GM12878 (cell line): ENCODE measurements at regions of chr6 and their contacts with region 1.

Region 1: DNA sequence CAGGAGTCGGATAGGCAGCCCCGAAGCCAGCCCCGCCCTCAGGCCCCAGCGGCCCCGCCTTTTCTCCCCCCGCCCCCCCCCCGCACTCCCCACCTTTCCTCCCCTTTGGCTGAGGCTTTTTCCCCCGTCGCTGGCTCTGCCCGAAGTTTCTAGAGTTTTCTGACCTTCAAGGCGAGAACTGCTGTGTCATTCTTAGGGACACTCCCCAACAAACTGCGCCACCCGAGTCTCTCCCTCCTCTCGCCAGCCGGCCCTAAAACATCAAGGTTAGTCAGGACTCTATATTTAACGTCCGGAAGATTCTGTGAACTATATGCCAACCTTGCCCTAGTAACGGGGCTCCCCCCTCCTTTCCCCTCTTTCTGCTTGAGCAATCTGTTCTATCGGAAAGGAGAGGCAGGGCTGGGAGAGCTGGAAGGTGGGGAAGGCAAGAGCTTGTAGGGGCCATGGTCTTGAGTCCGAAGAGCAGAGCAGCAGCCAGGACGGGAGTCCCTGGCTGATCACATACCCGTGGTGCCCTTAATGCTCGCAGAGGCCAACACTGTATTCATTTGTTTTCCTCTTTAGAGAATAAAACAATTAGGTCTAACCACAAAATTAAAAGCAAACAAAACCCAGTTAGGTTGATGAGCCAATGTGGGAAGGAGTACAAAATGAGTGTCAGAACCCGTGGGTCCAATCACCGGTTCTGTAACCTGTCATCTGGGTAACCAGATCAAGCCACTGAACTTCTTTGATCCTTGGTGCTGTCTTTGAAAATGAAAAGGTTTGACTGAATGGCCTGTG is 5.3 kb upstream of the HSPA1B start:
- DNase-seq: no peak
- ATAC-seq: peak; percentile 56
- H3K4me3 ChIP-seq: peak overlapping the region; percentile 78
- H3K27ac ChIP-seq: peak overlapping the region; percentile 50
- H3K4me1 ChIP-seq: peaks cover 14% of the 10 kb centered on the region
- H3K27me3 ChIP-seq: no peaks in the 10 kb centered on the region
- CTCF ChIP-seq: no peak
- EP300 ChIP-seq: no peak
- POLR2A ChIP-seq: peak; percentile 7; the same call in 1 of the 2 replicates
- RAD21 ChIP-seq: no peak

Region 2: DNA sequence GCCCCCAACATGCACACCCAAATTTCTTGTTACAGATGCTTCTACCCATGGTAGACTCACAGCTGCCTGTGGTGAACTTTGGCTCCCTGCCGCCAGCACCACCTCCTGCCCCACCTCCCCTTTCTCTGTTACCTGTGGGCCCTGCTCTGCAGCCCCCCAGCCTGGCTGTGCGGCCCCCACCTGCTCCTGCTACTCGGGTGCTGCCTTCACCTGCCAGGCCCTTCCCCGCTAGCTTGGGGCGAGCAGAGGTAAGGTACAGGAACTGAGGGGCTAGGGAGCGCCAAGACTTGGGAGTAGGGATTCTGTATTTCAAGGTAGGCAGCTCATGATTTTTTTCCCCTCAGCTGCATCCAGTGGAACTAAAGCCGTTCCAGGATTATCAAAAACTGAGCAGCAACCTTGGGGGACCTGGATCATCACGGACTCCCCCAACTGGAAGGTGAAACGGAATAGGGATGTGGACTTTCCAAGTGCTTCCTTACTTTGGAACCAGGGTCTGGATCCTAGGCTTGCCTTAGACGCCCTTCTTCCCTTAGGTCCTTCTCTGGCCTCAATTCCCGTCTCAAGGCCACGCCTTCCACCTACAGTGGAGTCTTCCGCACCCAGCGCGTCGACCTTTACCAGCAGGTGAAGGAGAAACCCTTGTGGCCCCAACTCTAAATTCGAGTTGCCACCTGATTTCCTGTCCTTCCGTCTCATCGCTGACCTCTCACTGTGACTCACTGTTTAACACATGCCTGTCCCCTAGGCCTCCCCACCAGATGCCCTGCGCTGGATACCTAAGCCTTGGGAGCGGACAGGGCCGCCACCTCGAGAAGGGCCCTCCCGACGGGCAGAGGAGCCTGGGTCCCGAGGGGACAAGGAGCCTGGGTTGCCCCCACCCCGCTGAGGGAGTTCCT is 185.3 kb before region 1 on chr6:
- CTCF ChIA-PET with region 1: no interaction called
- POLR2A ChIA-PET with region 1: no interaction called
- RAD21 ChIA-PET with region 1: no interaction called
- SMC1A ChIA-PET with region 1: no interaction called
- in situ Hi-C with region 1: no loop called
- intact Hi-C with region 1: no loop called
- DNase-seq: no peak
- ATAC-seq: no peak
- H3K4me3 ChIP-seq: no peak overlapping the region
- H3K27ac ChIP-seq: no peak overlapping the region
- H3K4me1 ChIP-seq: no peaks in the 10 kb centered on the region
- H3K27me3 ChIP-seq: no peaks in the 10 kb centered on the region
- CTCF ChIP-seq: no peak
- EP300 ChIP-seq: no peak
- POLR2A ChIP-seq: peak; percentile 36; the same call in 1 of the 2 replicates
- RAD21 ChIP-seq: no peak

Region 3: DNA sequence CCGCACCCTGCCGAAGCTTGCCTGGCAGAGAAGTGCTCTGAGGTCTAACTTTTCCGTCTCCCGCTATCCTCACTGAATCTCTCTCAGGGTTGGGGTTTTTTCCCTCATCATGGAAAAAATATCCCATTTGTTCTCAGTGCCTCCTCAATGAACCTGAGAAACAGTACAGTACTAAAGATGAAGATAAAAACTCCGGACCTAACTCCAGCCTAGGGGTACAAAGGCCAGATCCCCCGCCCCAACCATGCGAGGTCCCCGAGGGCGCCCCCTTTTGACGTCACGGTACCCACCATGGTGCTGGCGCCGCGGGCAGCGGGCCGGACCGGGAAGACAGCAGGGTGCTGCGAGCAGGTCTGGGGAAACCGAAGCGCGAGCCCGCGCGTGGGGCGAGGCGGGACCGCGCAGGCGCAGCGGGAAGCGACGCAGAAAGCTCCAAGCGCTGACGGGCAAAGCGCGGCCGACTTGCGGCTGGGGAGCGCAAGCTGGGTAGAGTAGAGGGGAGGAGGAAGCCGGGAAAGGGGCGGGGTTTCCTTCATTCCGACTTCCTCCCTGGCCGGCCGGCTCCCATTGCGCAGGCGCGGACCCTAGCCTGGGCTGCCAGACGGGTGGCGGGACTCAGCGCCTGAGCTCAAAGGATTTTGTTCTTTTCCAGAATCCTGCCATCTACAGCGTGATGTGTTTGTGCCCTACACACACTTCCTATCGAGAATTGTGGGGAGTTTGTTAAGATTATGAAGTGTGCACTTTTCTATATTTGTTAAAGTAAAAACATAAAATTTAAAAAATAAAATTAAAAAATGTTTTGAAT is 15.6 kb before region 1 on chr6 and contains the start of gene LSM2:
- CTCF ChIA-PET with region 1: interaction called, 4 read pairs
- POLR2A ChIA-PET with region 1: interaction called, 91 read pairs
- RAD21 ChIA-PET with region 1: interaction called, 17 read pairs
- SMC1A ChIA-PET with region 1: interaction called, 22 read pairs
- in situ Hi-C with region 1: no loop called
- intact Hi-C with region 1: no loop called
- DNase-seq: peak; percentile 74
- ATAC-seq: peak; percentile 98
- H3K4me3 ChIP-seq: peak within 1 kb of the TSS; percentile 92
- H3K27ac ChIP-seq: peak within 1 kb of the TSS; percentile 81
- H3K4me1 ChIP-seq: peaks cover 5% of the 10 kb centered on the region
- H3K27me3 ChIP-seq: no peaks in the 10 kb centered on the region
- CTCF ChIP-seq: peak; percentile 24 to 34 (median 24); a peak in 3 of 6 replicates
- EP300 ChIP-seq: no peak
- POLR2A ChIP-seq: peak; percentile 92
- RAD21 ChIP-seq: no peak
- polyA plus RNA-seq, gene LSM2: 245 to 248 TPM